Ascending aorta (tissue), 2 donors: ENCODE measurements at regions of chr15 and their contacts with region 1.

Region 1: GRCh38 chr15:99928429-99928981 is 195.3 kb upstream of the LYSMD4 start:
- DNase-seq: peak; percentile 24 to 91
- H3K4me3 ChIP-seq: peak overlapping the region; percentile 25 to 56
- H3K27ac ChIP-seq: peak overlapping the region; percentile 80 to 87
- H3K4me1 ChIP-seq: peaks cover 0 to 4% of the 10 kb centered on the region in 2 donors
- H3K27me3 ChIP-seq: no peaks in the 10 kb centered on the region
- CTCF ChIP-seq: peak; percentile 69 to 75 (median 72)

Region 2: GRCh38 chr15:99943466-99943865 is 15.0 kb after region 1 on chr15:
- intact Hi-C with region 1: no loop called
- DNase-seq: no peak
- H3K4me3 ChIP-seq: no peak overlapping the region
- H3K27ac ChIP-seq: no peak overlapping the region
- H3K4me1 ChIP-seq: no peaks in the 10 kb centered on the region
- H3K27me3 ChIP-seq: no peaks in the 10 kb centered on the region
- CTCF ChIP-seq: no peak

Region 3: GRCh38 chr15:100043015-100043641 is 114.6 kb after region 1 on chr15:
- intact Hi-C with region 1: loop called (anchors 5 kb)
- DNase-seq: no peak
- H3K4me3 ChIP-seq: peak overlapping the region; percentile 1 to 32
- H3K27ac ChIP-seq: peak overlapping the region; percentile 48 to 58
- H3K4me1 ChIP-seq: peaks cover 0 to 10% of the 10 kb centered on the region in 2 donors
- H3K27me3 ChIP-seq: no peaks in the 10 kb centered on the region
- CTCF ChIP-seq: no peak

Region 4: GRCh38 chr15:100111103-100112060 is 182.9 kb after region 1 on chr15:
- intact Hi-C with region 1: loop called (anchors 5 kb)
- DNase-seq: peak; percentile 79 to 95
- H3K4me3 ChIP-seq: peak overlapping the region in 1 of 2 donors; percentile 6
- H3K27ac ChIP-seq: peak overlapping the region; percentile 90 to 96
- H3K4me1 ChIP-seq: peaks cover 39 to 58% of the 10 kb centered on the region in 2 donors
- H3K27me3 ChIP-seq: no peaks in the 10 kb centered on the region
- CTCF ChIP-seq: peak in 1 of 3 experiments; percentile 15

Region 5: DNA sequence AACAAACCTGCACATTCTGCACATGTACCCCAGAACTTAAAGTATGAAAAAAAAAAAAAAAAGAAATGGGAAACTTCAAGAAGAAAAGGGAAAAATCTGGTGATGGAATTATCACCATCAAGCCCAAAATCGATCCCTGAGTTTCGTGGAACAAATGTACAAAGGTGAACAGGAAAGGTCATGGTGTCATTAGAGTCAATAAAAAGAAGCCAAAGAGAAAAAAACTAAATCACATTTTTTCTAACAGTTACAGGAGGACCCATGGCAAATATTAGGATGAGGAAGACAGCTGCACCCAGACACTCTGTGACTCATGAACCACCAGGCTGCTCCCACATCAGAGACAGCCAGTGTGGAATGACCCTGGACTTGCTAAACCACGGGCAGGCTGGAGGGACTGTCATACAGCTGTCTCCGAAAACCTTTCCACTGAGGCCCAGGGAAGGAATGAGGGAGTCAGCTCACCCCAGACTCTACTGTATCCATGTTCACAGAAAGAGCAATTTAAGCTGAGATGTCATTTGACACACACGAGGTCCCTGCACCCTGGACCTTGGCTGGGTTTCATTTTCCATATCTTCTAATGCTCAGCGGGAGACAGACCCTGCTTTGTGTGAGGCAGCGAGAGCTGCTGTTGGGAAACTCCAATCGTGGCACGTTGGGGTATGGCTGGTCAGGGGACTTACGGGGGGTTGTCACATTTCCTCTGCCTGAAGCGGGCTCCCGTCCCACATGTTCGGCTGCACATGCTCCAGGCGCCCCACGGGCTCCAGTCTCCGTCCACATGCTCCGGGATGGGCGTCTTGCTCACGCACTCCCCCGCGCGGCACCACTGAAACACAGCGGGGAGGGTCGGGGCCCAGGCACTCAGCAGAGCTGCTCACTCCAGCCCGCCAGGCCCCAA is 203.1 kb after region 1 on chr15:
- intact Hi-C with region 1: loop called (anchors 2 kb)
- DNase-seq: no peak
- H3K4me3 ChIP-seq: peak overlapping the region; percentile 2 to 53
- H3K27ac ChIP-seq: peak overlapping the region in 1 of 2 donors; percentile 42
- H3K4me1 ChIP-seq: no peaks in the 10 kb centered on the region
- H3K27me3 ChIP-seq: no peaks in the 10 kb centered on the region
- CTCF ChIP-seq: peak; percentile 53 to 81 (median 72)

Region 6: DNA sequence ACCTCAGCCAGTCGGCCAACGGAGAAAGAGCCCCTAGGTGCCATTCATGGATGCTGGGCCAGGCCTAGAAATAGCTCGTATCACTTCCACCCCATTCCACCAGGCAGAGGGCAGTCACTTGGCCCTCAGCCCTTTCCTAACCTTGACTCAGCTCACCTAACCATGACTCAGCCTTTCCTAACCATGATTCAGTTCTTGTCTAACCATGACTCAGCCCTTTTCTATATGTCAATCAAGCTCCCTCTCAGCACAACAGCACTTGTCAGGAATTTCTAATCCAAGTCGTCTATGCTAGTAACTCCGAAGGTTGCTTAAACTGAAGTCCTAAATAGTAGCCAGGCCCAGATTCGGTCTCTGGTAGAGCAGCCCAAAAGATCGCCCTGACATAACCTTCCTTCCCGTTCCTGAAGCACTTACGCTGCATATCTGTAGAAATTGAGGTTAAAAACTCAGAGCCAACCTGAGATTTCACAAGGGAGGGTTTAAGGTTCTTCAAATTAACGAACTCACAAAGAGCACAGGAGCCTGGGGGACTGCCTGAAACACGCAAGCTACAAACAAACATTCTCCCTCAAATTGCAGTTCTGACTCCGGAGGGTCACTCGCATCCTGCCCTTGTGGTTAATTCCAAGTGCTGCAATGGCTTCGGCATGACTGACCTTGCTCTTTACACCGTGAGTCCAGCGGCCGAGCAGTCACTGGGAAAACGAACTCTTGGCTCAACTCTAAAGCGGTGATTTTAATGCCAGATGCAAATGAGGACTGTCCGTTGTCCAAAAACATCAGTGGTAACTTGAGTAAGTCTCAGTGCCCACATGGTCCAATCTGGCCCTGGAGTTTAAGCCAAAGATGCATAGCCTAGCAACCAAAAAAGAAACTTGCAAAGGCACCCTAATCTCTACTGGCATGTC is 313.3 kb after region 1 on chr15:
- intact Hi-C with region 1: loop called (anchors 2 kb)
- DNase-seq: peak in 1 of 2 donors; percentile 80
- H3K4me3 ChIP-seq: peak overlapping the region; percentile 3 to 37
- H3K27ac ChIP-seq: peak overlapping the region; percentile 67 to 70
- H3K4me1 ChIP-seq: peaks cover 5 to 30% of the 10 kb centered on the region in 2 donors
- H3K27me3 ChIP-seq: no peaks in the 10 kb centered on the region
- CTCF ChIP-seq: peak in 1 of 3 experiments; percentile 7

Region 7: DNA sequence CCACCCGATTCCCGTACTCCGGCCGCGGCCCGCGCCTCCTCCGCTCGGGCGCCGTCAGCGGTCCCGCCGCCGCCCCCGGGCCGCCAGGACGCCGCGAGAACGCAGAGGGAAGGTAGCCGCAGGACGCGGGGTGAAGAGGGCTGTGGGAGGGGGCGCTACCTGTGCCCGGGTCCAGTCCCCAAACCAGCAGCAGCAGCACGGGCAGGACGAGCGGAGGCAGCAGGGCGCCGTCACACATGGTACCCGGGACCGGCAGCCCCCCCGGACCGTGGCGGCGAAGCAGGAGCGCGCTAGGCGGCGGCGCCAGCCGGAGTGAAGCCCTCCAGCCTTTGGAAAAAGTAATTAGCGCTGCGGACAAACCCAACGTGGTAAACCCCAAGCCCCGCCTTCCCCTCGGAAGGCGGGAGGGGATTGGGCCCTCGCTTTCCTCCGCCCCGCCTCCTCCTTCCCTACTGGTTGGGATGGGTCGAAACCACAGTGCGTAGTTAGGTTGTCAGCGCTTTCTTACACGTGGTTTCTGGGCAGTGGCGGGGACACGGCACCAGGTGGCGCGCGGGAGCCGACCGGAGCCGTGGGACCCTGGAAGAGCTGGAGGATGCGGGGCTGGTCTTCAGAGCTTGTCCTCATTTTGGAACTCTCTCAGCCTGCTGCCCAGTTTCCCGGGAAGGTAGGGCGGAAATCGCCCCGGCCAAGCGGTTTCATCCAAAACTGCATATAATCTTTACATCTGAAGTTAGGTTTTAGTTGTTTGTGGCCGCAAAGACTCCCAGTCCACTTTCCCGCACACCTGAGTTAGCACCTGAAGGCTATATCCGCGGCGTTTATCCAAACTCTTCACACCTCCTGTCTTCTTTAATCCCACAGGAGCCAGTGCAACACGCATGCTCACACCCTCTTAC is 413.4 kb after region 1 on chr15 and contains the start of gene ADAMTS17:
- intact Hi-C with region 1: loop called (anchors 2 kb)
- DNase-seq: peak; percentile 89 to 98
- H3K4me3 ChIP-seq: peak within 1 kb of the TSS; percentile 81 to 96
- H3K27ac ChIP-seq: peak within 1 kb of the TSS; percentile 69 to 78
- H3K4me1 ChIP-seq: peaks cover 0 to 2% of the 10 kb centered on the region in 2 donors
- H3K27me3 ChIP-seq: no peaks in the 10 kb centered on the region
- CTCF ChIP-seq: peak; percentile 91 to 95 (median 94)
- total RNA-seq, gene ADAMTS17: 2.8 TPM

Region 8: GRCh38 chr15:100471933-100472332 is 543.4 kb after region 1 on chr15:
- intact Hi-C with region 1: no loop called
- DNase-seq: no peak
- H3K4me3 ChIP-seq: no peak overlapping the region
- H3K27ac ChIP-seq: no peak overlapping the region
- H3K4me1 ChIP-seq: no peaks in the 10 kb centered on the region
- H3K27me3 ChIP-seq: no peaks in the 10 kb centered on the region
- CTCF ChIP-seq: no peak

Region 9: DNA sequence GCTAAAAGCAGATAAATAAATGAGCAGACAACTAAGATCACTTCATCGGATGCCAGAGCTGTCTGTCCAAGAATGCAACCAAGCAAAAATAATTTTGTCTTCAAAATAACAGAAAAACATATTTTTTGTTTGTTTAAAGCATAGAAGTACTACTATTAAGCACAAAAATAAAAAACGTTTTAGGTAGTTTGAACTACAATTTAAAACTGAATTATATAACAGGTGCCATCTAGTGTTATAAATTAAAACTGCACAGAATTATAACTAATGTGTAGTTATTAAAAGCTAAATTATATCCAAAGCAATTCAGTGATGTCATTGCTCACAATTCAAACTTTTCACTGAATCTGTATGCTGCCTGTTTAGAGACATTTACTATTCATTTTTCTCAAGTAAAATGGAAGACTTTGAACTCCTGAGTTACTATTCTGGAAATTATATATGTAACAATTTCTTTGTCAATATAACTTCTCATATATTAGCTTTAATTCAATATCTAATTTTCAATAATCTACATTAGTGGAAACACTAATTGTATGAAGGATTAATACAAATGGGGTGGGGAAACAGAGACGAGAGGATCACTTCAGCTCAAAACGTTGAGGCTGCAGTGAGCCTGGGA is 644.0 kb after region 1 on chr15:
- intact Hi-C with region 1: loop called (anchors 5 kb)
- DNase-seq: no peak
- H3K4me3 ChIP-seq: no peak overlapping the region
- H3K27ac ChIP-seq: no peak overlapping the region
- H3K4me1 ChIP-seq: no peaks in the 10 kb centered on the region
- H3K27me3 ChIP-seq: no peaks in the 10 kb centered on the region
- CTCF ChIP-seq: peak; percentile 36 to 52 (median 49)